ENCODE measurements at regions of chr1 and their contacts with region 1.

Region 1: GRCh38 chr1:69172003-69173000 is 395.4 kb upstream of the LRRC7 start:
- DNase-seq: no peak
- H3K4me3 Mint-ChIP-seq: no peak overlapping the region
- H3K27ac Mint-ChIP-seq: no peak overlapping the region
- H3K4me1 Mint-ChIP-seq: no peaks in the 10 kb centered on the region
- H3K27me3 Mint-ChIP-seq: no peaks in the 10 kb centered on the region

Region 2: GRCh38 chr1:68994096-68994495 is 178.2 kb before region 1 on chr1:
- CTCF ChIA-PET with region 1: no interaction called
- POLR2A ChIA-PET with region 1: no interaction called
- intact Hi-C with region 1: no loop called
- DNase-seq: no peak
- H3K4me3 Mint-ChIP-seq: no peak overlapping the region
- H3K27ac Mint-ChIP-seq: no peak overlapping the region
- H3K4me1 Mint-ChIP-seq: no peaks in the 10 kb centered on the region
- H3K27me3 Mint-ChIP-seq: no peaks in the 10 kb centered on the region

Region 3: GRCh38 chr1:69055194-69055593 is 117.1 kb before region 1 on chr1:
- CTCF ChIA-PET with region 1: no interaction called
- POLR2A ChIA-PET with region 1: no interaction called
- intact Hi-C with region 1: loop called (anchors 10 kb)
- DNase-seq: no peak
- H3K4me3 Mint-ChIP-seq: no peak overlapping the region
- H3K27ac Mint-ChIP-seq: no peak overlapping the region
- H3K4me1 Mint-ChIP-seq: no peaks in the 10 kb centered on the region
- H3K27me3 Mint-ChIP-seq: no peaks in the 10 kb centered on the region

Region 4: DNA sequence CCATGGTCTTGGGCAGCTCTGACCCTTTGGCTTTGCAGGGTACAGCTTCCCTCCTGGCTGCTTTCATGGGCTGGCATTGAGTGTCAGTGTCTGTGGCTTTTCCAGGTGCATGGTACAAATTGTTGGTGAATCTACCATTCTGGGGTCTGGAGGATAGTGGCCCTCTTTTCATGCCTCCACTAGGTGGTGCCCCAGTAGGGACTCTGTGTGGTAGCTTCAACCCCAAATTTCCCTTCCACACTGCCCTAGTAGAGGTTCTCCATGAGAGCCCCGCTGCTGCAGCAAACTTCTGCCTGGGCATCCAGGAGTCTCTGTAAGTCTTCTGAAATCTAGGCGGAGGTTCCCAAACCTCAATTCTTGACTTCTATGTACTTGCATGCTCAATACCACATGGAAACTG is 99.1 kb before region 1 on chr1:
- CTCF ChIA-PET with region 1: no interaction called
- POLR2A ChIA-PET with region 1: no interaction called
- intact Hi-C with region 1: no loop called
- DNase-seq: no peak
- H3K4me3 Mint-ChIP-seq: no peak overlapping the region
- H3K27ac Mint-ChIP-seq: no peak overlapping the region
- H3K4me1 Mint-ChIP-seq: no peaks in the 10 kb centered on the region
- H3K27me3 Mint-ChIP-seq: no peaks in the 10 kb centered on the region

Region 5: DNA sequence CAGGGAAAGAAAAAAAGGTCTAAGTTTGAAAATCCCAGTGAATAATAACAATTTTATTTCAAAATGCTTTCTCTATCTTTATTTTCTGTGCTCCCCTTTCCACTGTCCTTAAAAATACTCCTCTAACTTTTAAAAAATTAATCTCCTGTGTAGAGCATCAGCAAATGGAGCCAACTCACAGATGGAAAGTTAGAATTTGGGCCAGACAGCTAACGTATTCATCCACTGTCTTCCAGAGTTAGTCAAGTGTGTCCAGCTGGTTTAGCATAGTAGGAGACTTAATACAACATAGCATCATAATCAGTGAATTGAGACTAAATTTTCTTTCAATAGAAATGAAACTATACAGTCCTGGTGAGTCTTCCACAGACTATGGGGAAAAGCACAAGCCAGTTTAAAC is 23.6 kb before region 1 on chr1:
- CTCF ChIA-PET with region 1: no interaction called
- POLR2A ChIA-PET with region 1: no interaction called
- intact Hi-C with region 1: no loop called
- DNase-seq: no peak
- H3K4me3 Mint-ChIP-seq: no peak overlapping the region
- H3K27ac Mint-ChIP-seq: no peak overlapping the region
- H3K4me1 Mint-ChIP-seq: no peaks in the 10 kb centered on the region
- H3K27me3 Mint-ChIP-seq: no peaks in the 10 kb centered on the region

Region 6: GRCh38 chr1:69221524-69221923 is 49.2 kb after region 1 on chr1:
- CTCF ChIA-PET with region 1: no interaction called
- POLR2A ChIA-PET with region 1: no interaction called
- intact Hi-C with region 1: loop called (anchors 10 kb)
- DNase-seq: no peak
- H3K4me3 Mint-ChIP-seq: no peak overlapping the region
- H3K27ac Mint-ChIP-seq: no peak overlapping the region
- H3K4me1 Mint-ChIP-seq: no peaks in the 10 kb centered on the region
- H3K27me3 Mint-ChIP-seq: no peaks in the 10 kb centered on the region

Measured in activated CD4-positive, alpha-beta memory T cell treated with anti-CD3 and anti-CD28 coated beads for 36 hours (primary cell).